ENCODE measurements at regions of chr5 and their contacts with region 1.

Region 1: GRCh38 chr5:39231705-39232525 is 12.6 kb upstream of the FYB1 start:
- DNase-seq: no peak
- H3K4me3 Mint-ChIP-seq: no peak overlapping the region
- H3K27ac Mint-ChIP-seq: peak overlapping the region; percentile 82
- H3K4me1 Mint-ChIP-seq: peaks cover 13% of the 10 kb centered on the region
- H3K27me3 Mint-ChIP-seq: no peaks in the 10 kb centered on the region

Region 2: GRCh38 chr5:39256477-39257235 is 24.7 kb after region 1 on chr5:
- intact Hi-C with region 1: loop called (anchors 2 kb)
- DNase-seq: no peak
- H3K4me3 Mint-ChIP-seq: no peak overlapping the region
- H3K27ac Mint-ChIP-seq: no peak overlapping the region
- H3K4me1 Mint-ChIP-seq: peaks cover 19% of the 10 kb centered on the region
- H3K27me3 Mint-ChIP-seq: no peaks in the 10 kb centered on the region

Region 3: GRCh38 chr5:39274398-39275085 is 42.6 kb after region 1 on chr5:
- intact Hi-C with region 1: loop called (anchors 2 kb)
- DNase-seq: no peak
- H3K4me3 Mint-ChIP-seq: peak overlapping the region; percentile 74
- H3K27ac Mint-ChIP-seq: peak overlapping the region; percentile 95
- H3K4me1 Mint-ChIP-seq: peaks cover 36% of the 10 kb centered on the region
- H3K27me3 Mint-ChIP-seq: no peaks in the 10 kb centered on the region